CD8-positive, alpha-beta T cell (primary cell): ENCODE measurements at regions of chr3 and their contacts with region 1.

Region 1: GRCh38 chr3:54882129-54882833 is 45.6 kb downstream of the LRTM1 start:
- DNase-seq: no peak
- ATAC-seq: no peak
- H3K4me3 ChIP-seq: no peak overlapping the region
- H3K4me3 Mint-ChIP-seq: no peak overlapping the region
- H3K27ac ChIP-seq: no peak overlapping the region
- H3K27ac Mint-ChIP-seq: no peak overlapping the region
- H3K4me1 ChIP-seq: no peaks in the 10 kb centered on the region
- H3K4me1 Mint-ChIP-seq: no peaks in the 10 kb centered on the region
- H3K27me3 ChIP-seq: no peaks in the 10 kb centered on the region
- H3K27me3 Mint-ChIP-seq: no peaks in the 10 kb centered on the region
- CTCF ChIP-seq: no peak

Region 2: GRCh38 chr3:54914180-54914579 is 31.9 kb after region 1 on chr3:
- CTCF ChIA-PET with region 1: no interaction called
- POLR2A ChIA-PET with region 1: no interaction called
- intact Hi-C with region 1: loop called in 1 of 2 experiments (anchors 1 kb)
- DNase-seq: no peak
- ATAC-seq: no peak
- H3K4me3 ChIP-seq: no peak overlapping the region
- H3K4me3 Mint-ChIP-seq: no peak overlapping the region
- H3K27ac ChIP-seq: no peak overlapping the region
- H3K27ac Mint-ChIP-seq: no peak overlapping the region
- H3K4me1 ChIP-seq: no peaks in the 10 kb centered on the region
- H3K4me1 Mint-ChIP-seq: no peaks in the 10 kb centered on the region
- H3K27me3 ChIP-seq: no peaks in the 10 kb centered on the region
- H3K27me3 Mint-ChIP-seq: no peaks in the 10 kb centered on the region
- CTCF ChIP-seq: no peak